ENCODE measurements at regions of chr15 and their contacts with region 1.

Region 1: GRCh38 chr15:69160141-69160993 is at the start of gene GLCE:
- DNase-seq: peak; percentile 96 to 98 (median 98)
- ATAC-seq: peak; percentile 99
- H3K4me3 ChIP-seq: peak within 1 kb of the TSS; percentile 80
- H3K27ac ChIP-seq: peak within 1 kb of the TSS; percentile 10
- H3K4me1 ChIP-seq: no peaks in the 10 kb centered on the region
- H3K27me3 ChIP-seq: no peaks in the 10 kb centered on the region
- total RNA-seq, gene GLCE: 8.5 to 10.2 (median 9.0) TPM

Region 2: DNA sequence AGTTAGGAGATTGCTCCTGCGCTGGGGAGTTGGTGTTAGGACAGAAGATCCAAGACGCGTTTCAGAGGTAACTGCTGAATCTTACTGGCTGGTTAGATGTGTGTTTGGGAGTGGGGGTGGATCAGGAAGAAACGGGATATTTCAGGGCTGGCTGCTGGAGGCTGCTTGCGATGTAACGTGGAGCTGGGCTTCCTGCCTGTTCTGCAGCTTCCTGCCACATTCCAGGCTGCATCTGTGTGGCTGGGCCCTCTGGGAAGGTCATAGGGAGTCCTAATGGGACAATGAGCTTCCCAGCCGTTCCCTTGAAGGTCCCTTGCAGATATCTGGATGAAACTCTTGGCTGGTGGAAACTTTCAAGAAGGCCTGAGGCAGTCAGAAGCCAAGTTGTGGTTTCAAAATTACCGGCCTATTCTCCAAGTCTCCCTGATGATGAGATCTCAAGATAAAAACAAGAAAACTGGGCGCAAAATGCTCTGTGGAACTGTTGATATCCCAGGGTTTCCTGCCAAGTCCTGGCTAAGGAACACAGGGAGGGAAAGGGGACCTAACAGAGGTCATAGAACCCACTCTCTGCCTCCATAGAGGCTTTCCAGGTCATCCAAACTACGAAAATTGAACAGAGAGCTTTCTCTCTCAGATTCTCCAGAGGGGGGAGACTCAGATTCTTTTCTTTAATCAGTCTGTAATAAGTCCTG is 78.9 kb before region 1 on chr15:
- intact Hi-C with region 1: loop called in 2 of 4 experiments (anchors 5 to 10 kb)
- DNase-seq: peak; percentile 80 to 88 (median 88)
- ATAC-seq: peak; percentile 86 to 87
- H3K4me3 ChIP-seq: no peak overlapping the region
- H3K27ac ChIP-seq: peak overlapping the region; percentile 92
- H3K4me1 ChIP-seq: peaks cover 17% of the 10 kb centered on the region
- H3K27me3 ChIP-seq: no peaks in the 10 kb centered on the region

Region 3: GRCh38 chr15:69096196-69096595 is 64.2 kb before region 1 on chr15:
- intact Hi-C with region 1: no loop called
- DNase-seq: no peak
- ATAC-seq: no peak
- H3K4me3 ChIP-seq: no peak overlapping the region
- H3K27ac ChIP-seq: no peak overlapping the region
- H3K4me1 ChIP-seq: no peaks in the 10 kb centered on the region
- H3K27me3 ChIP-seq: no peaks in the 10 kb centered on the region